CD4-positive, alpha-beta T cell (primary cell): ENCODE measurements at regions of chr14 and their contacts with region 1.

Region 1: DNA sequence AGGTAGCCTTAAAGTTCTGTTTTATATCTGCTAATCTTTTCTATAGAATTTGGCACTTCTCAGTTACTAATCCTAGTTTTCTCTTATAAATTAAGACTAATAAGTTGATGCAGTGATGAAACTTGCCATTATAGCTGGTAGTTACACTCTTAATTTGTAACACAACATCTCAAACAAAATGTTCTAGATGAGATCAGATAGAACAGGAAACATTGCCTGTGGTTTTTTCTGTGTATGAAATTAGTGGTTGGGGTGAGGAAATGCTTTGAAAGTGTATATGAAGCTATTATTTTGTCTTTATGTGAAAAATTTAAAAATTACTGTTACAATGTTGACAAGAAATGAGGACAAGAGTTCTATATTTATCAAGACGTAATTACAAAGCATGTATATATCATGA is 91.9 kb downstream of the PCNX1 start:
- DNase-seq: peak in 3 of 14 experiments; percentile 52 to 85 (median 56)
- ATAC-seq: peak; percentile 89
- H3K4me3 ChIP-seq: peak overlapping the region; percentile 10
- H3K4me3 Mint-ChIP-seq: peak overlapping the region; percentile 56
- H3K27ac ChIP-seq: peak overlapping the region; percentile 42 to 64
- H3K27ac Mint-ChIP-seq: peak overlapping the region; percentile 79
- H3K4me1 ChIP-seq: peaks cover 25% of the 10 kb centered on the region
- H3K4me1 Mint-ChIP-seq: peaks cover 89% of the 10 kb centered on the region
- H3K27me3 ChIP-seq: no peaks in the 10 kb centered on the region
- H3K27me3 Mint-ChIP-seq: no peaks in the 10 kb centered on the region
- CTCF ChIP-seq: no peak

Region 2: GRCh38 chr14:70981000-70981952 is 17.8 kb before region 1 on chr14:
- CTCF ChIA-PET with region 1: interaction called, 4 read pairs
- POLR2A ChIA-PET with region 1: interaction called, 8 read pairs
- intact Hi-C with region 1: loop called in 1 of 2 experiments (anchors 2 kb)
- DNase-seq: peak in 1 of 14 experiments; percentile 52
- ATAC-seq: peak; percentile 72
- H3K4me3 ChIP-seq: peak overlapping the region; percentile 11
- H3K4me3 Mint-ChIP-seq: peak overlapping the region; percentile 35
- H3K27ac ChIP-seq: peak overlapping the region in 1 of 2 donors; percentile 65
- H3K27ac Mint-ChIP-seq: peak overlapping the region; percentile 72
- H3K4me1 ChIP-seq: peaks cover 9% of the 10 kb centered on the region
- H3K4me1 Mint-ChIP-seq: peaks cover 72% of the 10 kb centered on the region
- H3K27me3 ChIP-seq: no peaks in the 10 kb centered on the region
- H3K27me3 Mint-ChIP-seq: no peaks in the 10 kb centered on the region
- CTCF ChIP-seq: no peak

Region 3: DNA sequence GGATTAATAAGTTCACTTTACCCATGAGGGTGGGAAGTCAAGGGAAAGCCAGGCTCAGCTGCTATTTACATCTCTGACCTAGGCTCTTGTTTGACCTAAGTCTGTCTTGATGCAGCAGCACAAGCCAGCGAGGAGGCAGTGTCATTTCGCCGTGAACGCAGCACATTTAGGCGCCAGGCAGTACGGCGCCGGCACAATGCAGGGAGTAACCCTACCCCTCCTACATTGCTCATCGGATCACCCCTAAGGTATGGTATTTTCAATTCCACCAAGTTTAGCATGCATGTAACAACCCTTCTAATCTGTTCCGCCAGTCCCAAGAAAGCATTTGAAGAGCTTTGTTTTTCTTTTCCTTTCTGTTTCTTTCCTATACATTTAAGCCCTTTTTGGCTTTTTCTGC is 10.7 kb before region 1 on chr14:
- CTCF ChIA-PET with region 1: interaction called, 4 read pairs
- POLR2A ChIA-PET with region 1: interaction called, 12 read pairs
- intact Hi-C with region 1: loop called in 1 of 2 experiments (anchors 2 kb)
- DNase-seq: peak in 7 of 14 experiments; percentile 11 to 57 (median 43)
- ATAC-seq: peak; percentile 76
- H3K4me3 ChIP-seq: peak overlapping the region; percentile 45
- H3K4me3 Mint-ChIP-seq: peak overlapping the region; percentile 72
- H3K27ac ChIP-seq: peak overlapping the region in 1 of 2 donors; percentile 53
- H3K27ac Mint-ChIP-seq: peak overlapping the region; percentile 81
- H3K4me1 ChIP-seq: peaks cover 14% of the 10 kb centered on the region
- H3K4me1 Mint-ChIP-seq: peaks cover 57% of the 10 kb centered on the region
- H3K27me3 ChIP-seq: no peaks in the 10 kb centered on the region
- H3K27me3 Mint-ChIP-seq: no peaks in the 10 kb centered on the region
- CTCF ChIP-seq: no peak

Region 4: DNA sequence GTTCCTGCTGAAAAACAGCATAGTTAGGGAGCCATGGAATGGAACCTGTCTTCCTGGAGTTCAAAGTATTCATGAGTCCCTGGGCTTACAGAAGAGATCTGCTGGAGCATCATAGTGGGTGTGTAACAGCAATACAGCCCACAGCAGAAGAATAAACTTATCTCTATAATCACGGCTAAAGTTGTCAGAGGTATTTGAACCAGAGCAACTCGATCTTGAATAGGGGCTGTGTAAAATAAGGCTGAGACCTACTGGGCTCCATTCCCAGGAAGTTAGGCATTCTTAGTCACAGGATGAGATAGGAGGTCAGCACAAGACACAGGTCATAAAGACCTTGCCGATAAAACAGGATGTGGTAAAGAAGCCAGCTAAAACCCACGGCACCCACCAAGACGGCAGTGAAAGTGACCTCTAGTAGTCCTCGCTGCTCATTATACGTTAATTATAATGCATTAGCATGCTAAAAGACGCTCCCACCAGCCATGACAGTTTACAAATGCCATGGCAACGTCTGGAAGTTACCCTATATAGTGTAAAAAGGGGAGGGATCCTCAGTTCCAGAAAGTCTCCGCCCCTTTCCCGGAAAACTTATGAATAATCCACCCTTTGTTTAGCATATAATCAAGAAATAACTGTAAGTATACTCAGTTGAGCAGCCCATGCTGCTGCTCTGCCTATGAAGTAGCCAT is 131.5 kb after region 1 on chr14:
- CTCF ChIA-PET with region 1: no interaction called
- POLR2A ChIA-PET with region 1: no interaction called
- intact Hi-C with region 1: no loop called
- DNase-seq: peak in 2 of 14 experiments; percentile 13 to 23
- ATAC-seq: no peak
- H3K4me3 ChIP-seq: no peak overlapping the region
- H3K4me3 Mint-ChIP-seq: no peak overlapping the region
- H3K27ac ChIP-seq: no peak overlapping the region
- H3K27ac Mint-ChIP-seq: no peak overlapping the region
- H3K4me1 ChIP-seq: no peaks in the 10 kb centered on the region
- H3K4me1 Mint-ChIP-seq: peaks cover 7% of the 10 kb centered on the region
- H3K27me3 ChIP-seq: no peaks in the 10 kb centered on the region
- H3K27me3 Mint-ChIP-seq: no peaks in the 10 kb centered on the region
- CTCF ChIP-seq: no peak